Activated T-helper 1 cell treated with anti-CD3 and anti-CD28 coated beads, Interleukin-12 subunit alpha, Interleukin-12 subunit beta, Interleukin-2, Interleukin-4 antibody, amounts not matched to agents 30 ng/mL and 10 ng/mL and 1 ng/mL, durations not matched to agents 14 hours and 24 hours and 36 hours (primary cell): ENCODE measurements at regions of chr5 and their contacts with region 1.

Region 1: GRCh38 chr5:77775790-77776553 is at the start of gene TBCA:
- DNase-seq: peak; percentile 92
- H3K4me3 Mint-ChIP-seq: peak within 1 kb of the TSS; percentile 91
- H3K27ac Mint-ChIP-seq: peak within 1 kb of the TSS; percentile 97
- H3K4me1 Mint-ChIP-seq: peaks cover 48% of the 10 kb centered on the region
- H3K27me3 Mint-ChIP-seq: peaks cover 2% of the 10 kb centered on the region
- total RNA-seq, gene TBCA: 179 and 212 TPM in 2 replicates

Region 2: GRCh38 chr5:76715736-76716455 is 1060.1 kb before region 1 on chr5 and contains the start of gene F2R:
- intact Hi-C with region 1: loop called (anchors 10 kb)
- DNase-seq: no peak
- H3K4me3 Mint-ChIP-seq: peak within 1 kb of the TSS; percentile 85
- H3K27ac Mint-ChIP-seq: peak within 1 kb of the TSS; percentile 34
- H3K4me1 Mint-ChIP-seq: peaks cover 39% of the 10 kb centered on the region
- H3K27me3 Mint-ChIP-seq: peaks cover 19% of the 10 kb centered on the region
- total RNA-seq, gene F2R: 3.9 and 4.0 TPM in 2 replicates

Region 3: GRCh38 chr5:77030097-77031071 is 745.6 kb before region 1 on chr5 and contains the start of gene AGGF1:
- intact Hi-C with region 1: loop called (anchors 1 kb)
- DNase-seq: peak; percentile 87
- H3K4me3 Mint-ChIP-seq: peak within 1 kb of the TSS; percentile 90
- H3K27ac Mint-ChIP-seq: peak within 1 kb of the TSS; percentile 86
- H3K4me1 Mint-ChIP-seq: peaks cover 29% of the 10 kb centered on the region
- H3K27me3 Mint-ChIP-seq: peaks cover 4% of the 10 kb centered on the region
- total RNA-seq, gene AGGF1: 26.2 and 30.4 TPM in 2 replicates

Region 4: DNA sequence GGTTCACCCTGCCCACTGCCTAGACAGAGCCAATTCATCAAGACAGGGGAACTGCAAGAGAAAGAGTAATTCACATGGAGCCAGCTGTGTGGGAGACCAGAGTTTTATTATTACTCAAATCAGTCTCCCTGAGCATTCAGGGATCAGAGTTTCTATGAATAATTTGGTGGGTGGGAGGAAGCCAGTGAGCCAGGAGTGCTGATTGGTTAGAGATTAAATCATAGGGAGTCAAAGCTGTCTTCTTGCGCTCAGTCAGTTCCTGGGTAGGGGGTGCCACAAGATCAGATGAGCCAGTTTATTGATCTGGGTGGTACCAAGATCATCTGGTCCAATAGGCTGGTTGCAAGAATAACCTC is 24.3 kb before region 1 on chr5:
- intact Hi-C with region 1: loop called (anchors 1 kb)
- DNase-seq: no peak
- H3K4me3 Mint-ChIP-seq: no peak overlapping the region
- H3K27ac Mint-ChIP-seq: no peak overlapping the region
- H3K4me1 Mint-ChIP-seq: peaks cover 13% of the 10 kb centered on the region
- H3K27me3 Mint-ChIP-seq: no peaks in the 10 kb centered on the region

Region 5: GRCh38 chr5:77791356-77791755 is 15.4 kb after region 1 on chr5:
- intact Hi-C with region 1: no loop called
- DNase-seq: no peak
- H3K4me3 Mint-ChIP-seq: no peak overlapping the region
- H3K27ac Mint-ChIP-seq: no peak overlapping the region
- H3K4me1 Mint-ChIP-seq: no peaks in the 10 kb centered on the region
- H3K27me3 Mint-ChIP-seq: peaks cover 22% of the 10 kb centered on the region

Region 6: DNA sequence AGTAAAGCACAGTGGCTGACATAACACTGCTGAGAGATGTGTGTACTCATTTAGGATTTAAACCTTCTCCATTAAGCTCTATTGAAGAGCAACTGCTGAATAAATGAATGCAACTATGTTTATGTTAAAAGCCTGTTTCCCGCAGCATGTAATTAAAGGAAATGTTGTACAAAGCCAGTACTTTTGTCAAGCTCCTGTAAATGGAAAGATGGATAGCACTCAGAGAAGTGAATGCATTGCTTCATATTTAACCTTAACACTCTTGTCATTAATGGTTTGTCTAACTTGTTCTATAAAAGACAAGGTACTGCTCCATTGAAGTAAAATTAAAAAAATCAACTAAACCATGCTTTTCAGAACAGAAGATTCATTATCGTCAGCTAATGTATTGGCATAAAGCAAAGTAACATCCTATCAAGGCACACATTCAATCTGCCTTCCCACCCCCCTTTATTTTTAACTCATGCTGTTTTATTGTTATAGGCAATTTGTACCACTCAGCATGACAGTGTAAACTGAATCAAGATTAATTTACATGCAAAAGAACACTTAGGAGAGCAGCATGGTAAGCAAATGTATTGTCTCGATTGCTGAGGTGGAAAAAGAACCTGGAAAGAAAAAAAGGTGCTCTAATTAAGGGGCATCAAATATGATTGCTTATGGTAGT is 241.0 kb after region 1 on chr5:
- intact Hi-C with region 1: no loop called
- DNase-seq: no peak
- H3K4me3 Mint-ChIP-seq: no peak overlapping the region
- H3K27ac Mint-ChIP-seq: no peak overlapping the region
- H3K4me1 Mint-ChIP-seq: peaks cover 4% of the 10 kb centered on the region
- H3K27me3 Mint-ChIP-seq: no peaks in the 10 kb centered on the region

Region 7: DNA sequence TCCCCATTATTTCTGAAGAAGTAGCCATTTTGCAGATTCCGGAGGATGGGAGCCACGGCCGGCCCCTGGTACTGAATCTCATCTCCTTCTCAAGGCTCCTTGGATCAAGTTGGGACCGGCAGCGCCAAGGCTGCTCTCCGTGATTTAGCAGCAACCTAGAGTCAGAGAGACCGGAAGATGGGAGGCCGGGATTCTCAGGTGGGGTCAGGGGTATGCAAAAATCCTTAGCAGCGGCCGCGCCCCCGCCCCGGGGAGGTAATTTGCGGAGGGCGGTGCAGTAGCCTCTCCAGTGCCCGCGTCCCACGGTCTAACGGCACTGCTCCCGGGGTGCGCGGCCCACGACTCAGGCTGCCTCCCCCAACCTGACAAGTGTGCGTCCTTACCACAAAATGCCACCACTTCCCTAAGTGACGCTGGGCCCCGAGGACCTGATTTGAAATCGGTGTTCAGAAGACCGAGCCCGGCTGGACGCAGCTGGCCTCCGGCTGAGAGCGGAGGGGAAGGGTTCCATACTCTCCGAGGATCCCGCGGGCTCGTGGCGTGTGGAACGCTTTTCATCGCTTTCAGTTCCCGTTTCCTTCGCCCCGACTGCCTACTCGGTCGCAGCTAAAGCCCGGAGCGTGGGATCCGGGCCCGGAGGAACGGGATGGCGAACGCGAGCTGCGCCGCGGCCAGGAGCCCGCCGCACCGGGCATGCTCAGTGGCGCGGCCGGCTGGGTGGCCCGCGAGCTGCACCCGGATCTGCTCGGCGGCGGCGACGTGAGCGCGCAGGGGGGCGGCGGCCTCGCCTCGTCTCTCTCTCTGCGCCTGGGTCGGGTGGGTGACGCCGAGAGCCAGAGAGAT is 584.1 kb after region 1 on chr5 and contains the start of gene SCAMP1:
- intact Hi-C with region 1: loop called (anchors 1 kb)
- DNase-seq: peak; percentile 93
- H3K4me3 Mint-ChIP-seq: peak within 1 kb of the TSS; percentile 98
- H3K27ac Mint-ChIP-seq: peak within 1 kb of the TSS; percentile 92
- H3K4me1 Mint-ChIP-seq: peaks cover 32% of the 10 kb centered on the region
- H3K27me3 Mint-ChIP-seq: no peaks in the 10 kb centered on the region
- total RNA-seq, gene SCAMP1: 21.3 and 21.7 TPM in 2 replicates